ENCODE measurements at regions of chr13 and their contacts with region 1.

Region 1: GRCh38 chr13:76886292-76887075 is at the start of gene KCTD12:
- DNase-seq: peak; percentile 73
- ATAC-seq: peak; percentile 82
- H3K4me3 ChIP-seq: peak within 1 kb of the TSS; percentile 67
- H3K27ac ChIP-seq: peak within 1 kb of the TSS; percentile 69
- H3K4me1 ChIP-seq: peaks cover 4% of the 10 kb centered on the region; the same call in 1 of the 2 replicates
- H3K27me3 ChIP-seq: no peaks in the 10 kb centered on the region
- CTCF ChIP-seq: peak; percentile 41
- POLR2A ChIP-seq: no peak
- RAD21 ChIP-seq: 0 out of 2 replicates have a peak, but pooled peaks have one; percentile 12
- total RNA-seq, gene KCTD12: 1.8 and 3.9 TPM in 2 replicates

Region 2: GRCh38 chr13:75870397-75870903 is 1016.0 kb before region 1 on chr13:
- CTCF ChIA-PET with region 1: no interaction called
- POLR2A ChIA-PET with region 1: no interaction called
- dilution Hi-C with region 1: no loop called
- in situ Hi-C with region 1: no loop called
- intact Hi-C with region 1: loop called (anchors 2 kb)
- DNase-seq: peak; percentile 20
- ATAC-seq: peak; percentile 5; the same call in 1 of the 2 replicates
- H3K4me3 ChIP-seq: peak overlapping the region; percentile 34; the same call in 1 of the 2 replicates
- H3K27ac ChIP-seq: peak overlapping the region; percentile 4; the same call in 1 of the 2 replicates
- H3K4me1 ChIP-seq: no peaks in the 10 kb centered on the region
- H3K27me3 ChIP-seq: no peaks in the 10 kb centered on the region
- CTCF ChIP-seq: peak; percentile 68
- POLR2A ChIP-seq: peak; percentile 11; the same call in 1 of the 2 replicates
- RAD21 ChIP-seq: peak; percentile 61

Region 3: GRCh38 chr13:76667551-76667950 is 218.9 kb before region 1 on chr13:
- CTCF ChIA-PET with region 1: interaction called, 19 read pairs
- POLR2A ChIA-PET with region 1: no interaction called
- dilution Hi-C with region 1: no loop called
- in situ Hi-C with region 1: no loop called
- intact Hi-C with region 1: loop called (anchors 1 kb)
- DNase-seq: peak; percentile 77
- ATAC-seq: peak; percentile 94
- H3K4me3 ChIP-seq: no peak overlapping the region
- H3K27ac ChIP-seq: no peak overlapping the region
- H3K4me1 ChIP-seq: no peaks in the 10 kb centered on the region
- H3K27me3 ChIP-seq: peaks cover 2% of the 10 kb centered on the region; the same call in 1 of the 2 replicates
- CTCF ChIP-seq: peak; percentile 82
- POLR2A ChIP-seq: no peak
- RAD21 ChIP-seq: peak; percentile 86

Region 4: DNA sequence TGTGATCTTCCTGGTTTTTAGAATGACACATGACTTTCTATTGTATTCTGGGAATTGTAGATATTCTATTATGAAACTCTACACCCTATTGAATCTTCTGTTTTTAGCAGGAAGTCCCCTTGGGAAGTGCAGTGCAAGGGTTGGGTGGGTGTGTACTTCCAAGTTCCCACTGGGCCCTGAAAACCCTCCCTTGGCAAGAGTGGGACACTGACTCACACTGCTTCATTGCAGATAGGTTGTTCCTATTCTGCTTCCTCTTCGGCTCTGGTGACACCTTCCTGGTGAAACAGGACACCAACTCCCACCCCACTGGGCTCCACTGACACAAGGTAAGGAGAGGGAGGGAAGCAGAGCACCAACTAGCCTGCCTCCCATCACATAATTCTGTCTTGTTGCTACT is 122.1 kb before region 1 on chr13:
- CTCF ChIA-PET with region 1: no interaction called
- POLR2A ChIA-PET with region 1: no interaction called
- dilution Hi-C with region 1: no loop called
- in situ Hi-C with region 1: no loop called
- intact Hi-C with region 1: no loop called
- DNase-seq: peak; percentile 10
- ATAC-seq: no peak
- H3K4me3 ChIP-seq: no peak overlapping the region
- H3K27ac ChIP-seq: no peak overlapping the region
- H3K4me1 ChIP-seq: no peaks in the 10 kb centered on the region
- H3K27me3 ChIP-seq: no peaks in the 10 kb centered on the region
- CTCF ChIP-seq: no peak
- POLR2A ChIP-seq: no peak
- RAD21 ChIP-seq: no peak

Region 5: GRCh38 chr13:76980075-76980718 is 93.7 kb after region 1 on chr13:
- CTCF ChIA-PET with region 1: no interaction called
- POLR2A ChIA-PET with region 1: no interaction called
- dilution Hi-C with region 1: no loop called
- in situ Hi-C with region 1: no loop called
- intact Hi-C with region 1: loop called (anchors 5 kb)
- DNase-seq: peak; percentile 24
- ATAC-seq: peak; percentile 100
- H3K4me3 ChIP-seq: peak overlapping the region; percentile 44
- H3K27ac ChIP-seq: no peak overlapping the region
- H3K4me1 ChIP-seq: no peaks in the 10 kb centered on the region
- H3K27me3 ChIP-seq: peaks cover 24% of the 10 kb centered on the region
- CTCF ChIP-seq: peak; percentile 87
- POLR2A ChIP-seq: no peak
- RAD21 ChIP-seq: peak; percentile 66

Measured in IMR-90 (cell line).